ENCODE measurements at regions of chr2 and their contacts with region 1.

Region 1: GRCh38 chr2:70052676-70053075 is 34.6 kb upstream of the PCBP1 start:
- DNase-seq: no peak
- H3K4me3 ChIP-seq: no peak overlapping the region
- H3K27ac ChIP-seq: no peak overlapping the region
- H3K4me1 ChIP-seq: no peaks in the 10 kb centered on the region
- H3K27me3 ChIP-seq: no peaks in the 10 kb centered on the region
- CTCF ChIP-seq: no peak

Region 2: GRCh38 chr2:69989422-69990126 is 63.1 kb before region 1 on chr2:
- intact Hi-C with region 1: no loop called
- DNase-seq: peak in 1 of 2 donors; percentile 40
- H3K4me3 ChIP-seq: no peak overlapping the region
- H3K27ac ChIP-seq: no peak overlapping the region
- H3K4me1 ChIP-seq: no peaks in the 10 kb centered on the region
- H3K27me3 ChIP-seq: no peaks in the 10 kb centered on the region
- CTCF ChIP-seq: no peak

Region 3: DNA sequence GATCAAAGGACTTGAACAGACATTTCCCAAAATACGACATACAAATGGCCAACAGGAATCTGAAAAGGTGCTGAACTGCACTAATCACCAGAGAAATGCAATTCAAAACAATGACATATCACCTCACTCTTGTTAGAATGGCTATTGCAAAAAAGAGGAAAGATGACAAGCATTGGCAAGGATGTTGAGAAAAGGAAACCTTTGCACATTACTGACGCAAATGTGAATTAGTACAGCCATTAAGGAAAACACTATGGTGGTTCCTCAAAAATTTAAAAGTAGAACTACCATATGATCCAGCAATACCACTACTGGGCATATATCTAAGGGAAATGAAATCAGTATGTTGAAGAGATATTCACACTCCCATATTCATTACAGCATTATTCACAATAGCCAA is 33.6 kb before region 1 on chr2:
- intact Hi-C with region 1: no loop called
- DNase-seq: no peak
- H3K4me3 ChIP-seq: no peak overlapping the region
- H3K27ac ChIP-seq: no peak overlapping the region
- H3K4me1 ChIP-seq: no peaks in the 10 kb centered on the region
- H3K27me3 ChIP-seq: no peaks in the 10 kb centered on the region
- CTCF ChIP-seq: no peak

Region 4: DNA sequence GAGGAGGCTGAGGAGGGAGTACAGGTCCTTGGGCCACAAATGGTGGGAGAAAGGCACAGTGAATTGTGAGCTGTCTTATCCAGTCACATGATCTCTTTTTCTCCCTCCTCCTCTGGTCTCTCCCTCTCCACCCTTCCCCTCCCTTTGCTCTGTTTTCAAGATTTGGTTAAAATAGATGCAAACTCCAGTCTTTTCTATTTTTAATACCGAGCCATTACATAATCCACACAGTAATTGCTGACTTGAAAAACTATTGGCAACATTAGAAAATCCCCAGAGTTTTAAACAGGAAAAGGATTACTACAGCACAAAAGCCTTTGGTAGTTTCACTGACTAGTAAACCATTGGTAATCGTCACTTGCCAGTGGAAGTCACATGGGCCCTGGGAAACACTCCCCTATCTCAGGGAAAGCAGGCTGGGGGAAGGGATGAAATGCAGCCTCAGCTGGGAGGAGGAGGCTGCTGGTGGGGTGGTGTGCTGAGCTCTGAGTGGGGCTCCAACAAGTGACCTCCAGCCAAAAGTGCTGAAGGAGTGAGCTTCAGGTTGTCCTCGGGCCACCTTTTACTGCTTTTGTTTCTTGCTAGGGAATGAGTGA is 22.8 kb before region 1 on chr2:
- intact Hi-C with region 1: loop called (anchors 1 kb)
- DNase-seq: peak; percentile 83 to 90
- H3K4me3 ChIP-seq: no peak overlapping the region
- H3K27ac ChIP-seq: peak overlapping the region; percentile 79 to 80
- H3K4me1 ChIP-seq: peaks cover 4 to 28% (median 14%) of the 10 kb centered on the region in 4 donors
- H3K27me3 ChIP-seq: no peaks in the 10 kb centered on the region
- CTCF ChIP-seq: no peak

Region 5: DNA sequence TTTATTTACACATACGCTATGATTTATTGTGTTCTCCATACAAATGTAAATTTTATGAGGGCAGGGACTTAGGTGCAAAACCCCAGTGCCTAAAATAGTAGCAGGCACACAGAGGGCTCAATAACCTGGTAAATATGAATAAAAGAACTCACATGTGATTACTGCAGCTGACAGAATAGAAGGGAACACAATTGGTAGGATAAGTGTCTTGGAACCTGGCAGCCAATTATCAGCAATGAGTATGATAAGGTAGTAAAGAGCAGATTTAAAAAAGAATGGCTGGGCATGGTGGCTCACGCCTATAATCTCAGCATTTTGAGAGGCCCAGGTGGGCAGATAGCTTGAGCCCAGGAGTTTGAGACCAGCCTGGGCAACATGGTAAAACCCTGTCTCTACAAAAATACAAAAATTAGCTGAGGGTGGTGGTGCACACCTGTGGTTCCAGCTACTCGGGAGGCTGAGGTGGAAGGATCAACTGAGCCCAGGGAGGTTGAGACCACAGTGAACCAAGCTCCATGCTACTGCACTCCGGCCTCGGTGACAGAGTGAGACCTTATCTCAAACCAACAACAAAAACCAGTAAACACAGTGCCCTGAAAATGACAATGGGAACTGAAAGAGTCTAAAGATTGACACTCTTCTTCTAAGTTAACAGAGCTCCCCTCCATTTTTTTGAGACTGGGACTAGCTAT is 231.0 kb after region 1 on chr2:
- intact Hi-C with region 1: no loop called
- DNase-seq: no peak
- H3K4me3 ChIP-seq: no peak overlapping the region
- H3K27ac ChIP-seq: no peak overlapping the region
- H3K4me1 ChIP-seq: peaks cover 0 to 4% (median 0%) of the 10 kb centered on the region in 4 donors
- H3K27me3 ChIP-seq: no peaks in the 10 kb centered on the region
- CTCF ChIP-seq: no peak

Region 6: GRCh38 chr2:70873541-70873940 is 820.9 kb after region 1 on chr2:
- intact Hi-C with region 1: no loop called
- DNase-seq: no peak
- H3K4me3 ChIP-seq: no peak overlapping the region
- H3K27ac ChIP-seq: no peak overlapping the region
- H3K4me1 ChIP-seq: peaks cover 0 to 11% (median 8%) of the 10 kb centered on the region in 4 donors
- H3K27me3 ChIP-seq: peaks cover 0 to 69% of the 10 kb centered on the region in 2 donors
- CTCF ChIP-seq: no peak